ENCODE measurements at regions of chr11 and their contacts with region 1.

Region 1: GRCh38 chr11:86818466-86819192 is 18.3 kb downstream of the PRSS23 start:
- DNase-seq: no peak
- ATAC-seq: peak; percentile 63
- H3K4me3 ChIP-seq: no peak overlapping the region
- H3K4me1 ChIP-seq: no peaks in the 10 kb centered on the region
- CTCF ChIP-seq: peak; percentile 53

Region 2: DNA sequence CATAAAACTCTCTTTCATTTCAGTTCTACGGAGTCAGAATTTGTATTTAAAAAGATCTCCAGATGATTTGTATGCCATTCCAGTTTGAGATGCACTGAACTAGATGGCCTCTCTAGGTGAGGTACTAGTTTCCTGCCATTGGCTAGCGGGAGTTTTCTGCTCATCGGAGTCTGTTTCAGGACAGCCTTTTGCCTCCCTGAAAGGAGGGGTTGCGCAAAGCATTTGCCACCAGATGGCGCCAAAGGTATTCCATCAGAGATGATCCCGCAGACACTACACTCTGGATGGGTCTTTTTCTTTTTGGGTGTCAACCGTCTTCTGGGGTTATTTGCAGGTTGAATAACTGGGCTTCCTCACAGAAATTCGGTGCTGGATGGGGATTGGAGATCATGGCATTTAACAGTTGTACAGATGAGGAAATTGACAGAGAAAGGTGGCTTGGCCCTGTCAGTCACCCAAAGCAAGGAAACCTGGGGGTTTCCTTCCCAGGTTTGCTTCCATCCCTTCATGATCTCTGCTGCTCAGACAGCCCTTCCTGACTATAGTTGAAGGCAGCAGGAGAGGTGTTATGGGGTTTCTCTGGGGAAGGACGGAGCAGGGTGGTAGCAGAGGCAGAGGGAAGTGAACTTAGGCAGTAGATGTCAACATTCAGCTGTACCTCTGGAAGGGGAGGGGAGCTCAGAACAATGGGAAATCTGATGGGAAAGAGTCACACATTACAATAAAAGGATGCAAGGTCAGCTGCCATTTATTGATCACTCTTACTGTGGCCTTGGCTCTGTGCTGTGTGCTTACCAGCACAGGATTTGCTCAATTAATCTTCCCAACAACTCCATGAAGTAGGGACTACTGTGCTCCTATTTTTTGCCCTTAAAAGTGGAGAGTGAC is 362.3 kb before region 1 on chr11:
- intact Hi-C with region 1: loop called (anchors 5 kb)
- DNase-seq: peak; percentile 67 to 97 (median 82)
- ATAC-seq: peak; percentile 85
- H3K4me3 ChIP-seq: no peak overlapping the region
- H3K4me1 ChIP-seq: no peaks in the 10 kb centered on the region
- CTCF ChIP-seq: peak; percentile 72

Region 3: GRCh38 chr11:86620891-86621521 is 197.6 kb before region 1 on chr11:
- intact Hi-C with region 1: loop called in 1 of 2 experiments (anchors 10 kb)
- DNase-seq: no peak
- ATAC-seq: no peak
- H3K4me3 ChIP-seq: no peak overlapping the region
- H3K4me1 ChIP-seq: no peaks in the 10 kb centered on the region
- CTCF ChIP-seq: no peak

Region 4: GRCh38 chr11:86637988-86638387 is 180.6 kb before region 1 on chr11:
- intact Hi-C with region 1: no loop called
- DNase-seq: no peak
- ATAC-seq: no peak
- H3K4me3 ChIP-seq: no peak overlapping the region
- H3K4me1 ChIP-seq: no peaks in the 10 kb centered on the region
- CTCF ChIP-seq: no peak

Region 5: GRCh38 chr11:86876716-86877234 is 58.1 kb after region 1 on chr11:
- intact Hi-C with region 1: no loop called
- DNase-seq: no peak
- ATAC-seq: no peak
- H3K4me3 ChIP-seq: no peak overlapping the region
- H3K4me1 ChIP-seq: no peaks in the 10 kb centered on the region
- CTCF ChIP-seq: no peak